Heart right ventricle (tissue), 16 donors: ENCODE measurements at regions of chr2 and their contacts with region 1.

Region 1: GRCh38 chr2:73828818-73829570 is at the start of gene STAMBP:
- DNase-seq: peak; percentile 95 to 98
- ATAC-seq: peak; percentile 96 to 99 (median 99)
- H3K4me3 ChIP-seq: peak within 1 kb of the TSS; percentile 52 to 90 (median 80)
- H3K27ac ChIP-seq: peak within 1 kb of the TSS; percentile 65 to 99 (median 94)
- H3K4me1 ChIP-seq: peaks cover 0 to 41% (median 24%) of the 10 kb centered on the region in 9 donors
- H3K27me3 ChIP-seq: no peaks in the 10 kb centered on the region
- CTCF ChIP-seq: no peak
- total RNA-seq, gene STAMBP: 24.6 to 37.5 (median 33.0) TPM

Region 2: GRCh38 chr2:73436019-73436418 is 393.0 kb before region 1 on chr2:
- intact Hi-C with region 1: no loop called
- DNase-seq: no peak
- ATAC-seq: no peak
- H3K4me3 ChIP-seq: no peak overlapping the region
- H3K27ac ChIP-seq: no peak overlapping the region
- H3K4me1 ChIP-seq: no peaks in the 10 kb centered on the region
- H3K27me3 ChIP-seq: no peaks in the 10 kb centered on the region
- CTCF ChIP-seq: no peak

Region 3: GRCh38 chr2:73985308-73986084 is 156.5 kb after region 1 on chr2:
- intact Hi-C with region 1: loop called in 2 of 10 experiments (anchors 10 kb)
- DNase-seq: peak; percentile 54 to 65
- ATAC-seq: peak in 6 of 8 donors; percentile 5 to 27 (median 9)
- H3K4me3 ChIP-seq: peak overlapping the region; percentile 34 to 67 (median 61)
- H3K27ac ChIP-seq: peak overlapping the region in 8 of 10 donors; percentile 49 to 95 (median 74)
- H3K4me1 ChIP-seq: peaks cover 12 to 78% (median 66%) of the 10 kb centered on the region in 9 donors
- H3K27me3 ChIP-seq: no peaks in the 10 kb centered on the region
- CTCF ChIP-seq: no peak

Region 4: GRCh38 chr2:74104839-74105238 is 275.8 kb after region 1 on chr2:
- intact Hi-C with region 1: loop called in 1 of 10 experiments (anchors 10 kb)
- DNase-seq: no peak
- ATAC-seq: no peak
- H3K4me3 ChIP-seq: no peak overlapping the region
- H3K27ac ChIP-seq: no peak overlapping the region
- H3K4me1 ChIP-seq: peaks cover 0 to 5% (median 0%) of the 10 kb centered on the region in 9 donors
- H3K27me3 ChIP-seq: no peaks in the 10 kb centered on the region
- CTCF ChIP-seq: peak in 6 of 9 donors; percentile 10 to 42 (median 32)

Region 5: DNA sequence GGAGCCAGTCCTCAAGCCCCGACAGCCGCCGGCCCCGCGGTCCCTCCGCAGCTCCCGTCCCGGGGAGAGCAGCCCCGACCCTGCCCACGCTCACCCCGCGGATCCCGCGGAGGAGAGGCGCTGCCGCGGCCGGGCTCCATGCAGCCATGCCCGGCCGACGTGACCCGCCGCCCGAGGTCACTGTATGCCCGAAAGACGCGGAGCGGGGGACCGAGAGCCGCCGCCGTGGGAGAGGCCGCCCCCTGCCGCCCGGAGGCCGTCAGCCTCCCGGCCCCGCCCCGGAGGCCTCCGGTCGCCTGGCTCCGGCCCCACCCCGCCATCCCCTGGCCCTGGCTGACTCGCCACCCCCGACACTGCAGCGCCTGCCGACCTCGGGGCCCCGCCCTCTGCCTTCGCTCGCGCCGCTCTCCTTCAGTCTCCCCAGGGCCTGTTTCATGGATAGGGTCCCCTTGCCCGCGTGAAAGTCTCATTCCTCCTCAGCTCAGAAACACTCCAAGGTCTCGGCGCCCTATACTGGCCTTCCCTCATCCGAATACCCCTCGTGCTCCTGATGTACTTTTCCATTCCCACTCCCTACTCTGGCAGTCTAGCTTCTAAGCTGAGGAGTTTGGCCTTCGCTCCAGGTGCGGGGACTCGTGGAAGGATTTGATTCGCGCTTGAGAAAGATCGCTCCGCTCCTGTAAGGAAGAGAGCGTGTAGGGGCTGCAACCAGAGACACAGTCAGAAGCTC is 318.9 kb after region 1 on chr2 and contains the start of gene BOLA3:
- intact Hi-C with region 1: loop called in 2 of 10 experiments (anchors 10 kb)
- DNase-seq: peak; percentile 85 to 90
- ATAC-seq: peak; percentile 96 to 99 (median 98)
- H3K4me3 ChIP-seq: peak within 1 kb of the TSS; percentile 66 to 97 (median 86)
- H3K27ac ChIP-seq: peak within 1 kb of the TSS; percentile 14 to 83 (median 77)
- H3K4me1 ChIP-seq: peaks cover 10 to 30% (median 23%) of the 10 kb centered on the region in 9 donors
- H3K27me3 ChIP-seq: no peaks in the 10 kb centered on the region
- CTCF ChIP-seq: peak; percentile 56 to 93 (median 88)
- total RNA-seq, gene BOLA3: 63.9 to 117 (median 82.3) TPM

Region 6: GRCh38 chr2:74261204-74261864 is 432.3 kb after region 1 on chr2:
- intact Hi-C with region 1: loop called in 1 of 10 experiments (anchors 10 kb)
- DNase-seq: peak; percentile 28 to 51
- ATAC-seq: peak in 7 of 8 donors; percentile 46 to 81 (median 76)
- H3K4me3 ChIP-seq: no peak overlapping the region
- H3K27ac ChIP-seq: peak overlapping the region in 1 of 10 donors; percentile 6
- H3K4me1 ChIP-seq: peaks cover 0 to 3% (median 0%) of the 10 kb centered on the region in 9 donors
- H3K27me3 ChIP-seq: no peaks in the 10 kb centered on the region
- CTCF ChIP-seq: peak; percentile 15 to 71 (median 49)

Region 7: GRCh38 chr2:74334931-74335333 is 505.9 kb after region 1 on chr2:
- intact Hi-C with region 1: loop called in 2 of 10 experiments (anchors 10 kb)
- DNase-seq: peak; percentile 74 to 76
- ATAC-seq: peak; percentile 74 to 86 (median 82)
- H3K4me3 ChIP-seq: no peak overlapping the region
- H3K27ac ChIP-seq: no peak overlapping the region
- H3K4me1 ChIP-seq: peaks cover 0 to 6% (median 0%) of the 10 kb centered on the region in 9 donors
- H3K27me3 ChIP-seq: no peaks in the 10 kb centered on the region
- CTCF ChIP-seq: peak; percentile 85 to 99 (median 95)